ENCODE measurements at regions of chr1 and their contacts with region 1.

Region 1: DNA sequence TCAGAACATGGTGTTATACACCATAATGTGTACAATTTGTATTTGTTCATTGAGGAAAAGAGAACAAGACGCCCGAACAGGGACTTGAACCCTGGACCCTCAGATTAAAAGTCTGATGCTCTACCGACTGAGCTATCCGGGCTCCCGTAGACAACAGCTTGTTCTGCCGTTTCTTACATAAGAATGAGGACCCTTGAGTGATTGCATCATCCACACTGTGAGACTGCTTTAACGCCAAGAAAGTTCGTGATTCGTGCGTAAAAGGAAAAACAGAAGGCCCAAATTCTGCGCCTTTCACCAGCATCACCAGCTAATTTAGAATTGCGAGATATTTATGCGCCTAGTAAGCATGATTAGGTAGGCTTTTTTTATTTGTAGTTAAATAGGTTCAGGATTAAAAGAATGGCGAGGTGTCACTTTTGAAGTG is 9.2 kb upstream of the MDM4 start:
- DNase-seq: peak; percentile 97
- ATAC-seq: peak; percentile 90
- H3K4me3 ChIP-seq: peak overlapping the region; percentile 57 to 69
- H3K27ac ChIP-seq: peak overlapping the region; percentile 84
- H3K4me1 ChIP-seq: peaks cover 3% of the 10 kb centered on the region; the same call in 1 of the 2 replicates
- H3K27me3 ChIP-seq: no peaks in the 10 kb centered on the region
- CTCF ChIP-seq: no peak

Region 2: GRCh38 chr1:204431310-204432165 is 75.4 kb before region 1 on chr1:
- CTCF ChIA-PET with region 1: interaction called, 17 read pairs
- POLR2A ChIA-PET with region 1: interaction called, 6 read pairs
- in situ Hi-C with region 1: no loop called
- intact Hi-C with region 1: loop called (anchors 1 kb)
- DNase-seq: peak; percentile 50
- ATAC-seq: peak; percentile 95
- H3K4me3 ChIP-seq: no peak overlapping the region
- H3K27ac ChIP-seq: peak overlapping the region; percentile 11; the same call in 1 of the 2 replicates
- H3K4me1 ChIP-seq: peaks cover 3% of the 10 kb centered on the region; the same call in 1 of the 2 replicates
- H3K27me3 ChIP-seq: no peaks in the 10 kb centered on the region
- CTCF ChIP-seq: peak; percentile 95

Region 3: DNA sequence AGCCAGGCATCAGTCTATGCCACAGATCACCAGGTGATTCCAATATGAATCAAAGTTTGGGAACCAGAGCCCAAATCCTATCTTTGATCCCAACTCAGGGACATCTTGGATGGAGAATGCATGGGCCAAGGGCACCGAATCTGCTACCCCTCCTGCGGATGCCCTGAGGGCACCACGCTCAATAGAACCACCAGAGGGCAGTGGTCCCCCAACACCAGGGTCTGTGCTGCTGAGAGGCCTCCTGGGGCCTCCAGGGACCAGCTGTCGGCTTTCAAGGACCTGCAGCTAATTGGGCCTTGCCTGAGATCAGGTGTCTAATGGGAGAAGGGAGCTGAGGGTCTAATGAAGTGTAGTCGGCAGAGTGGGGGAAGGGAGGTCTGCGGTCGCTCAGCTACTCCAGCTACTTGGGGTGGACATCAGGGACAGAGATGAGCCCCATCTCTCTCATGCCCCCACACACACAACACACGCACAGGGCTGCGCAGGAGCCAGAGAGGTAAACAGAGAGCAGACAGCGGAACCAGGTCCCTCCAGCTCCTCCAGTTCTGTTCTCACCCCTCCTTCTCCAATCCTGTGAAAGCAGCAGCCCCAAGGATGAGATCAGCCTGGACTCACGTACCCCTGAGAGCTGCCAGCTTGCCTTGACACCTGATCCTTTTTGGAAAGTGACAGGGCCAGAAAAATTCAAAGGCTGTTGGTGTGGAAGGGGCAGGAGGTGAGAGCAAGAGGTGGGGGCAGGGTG is 60.4 kb before region 1 on chr1:
- CTCF ChIA-PET with region 1: interaction called, 9 read pairs
- POLR2A ChIA-PET with region 1: no interaction called
- in situ Hi-C with region 1: no loop called
- intact Hi-C with region 1: loop called (anchors 1 kb)
- DNase-seq: no peak
- ATAC-seq: peak; percentile 88
- H3K4me3 ChIP-seq: no peak overlapping the region
- H3K27ac ChIP-seq: no peak overlapping the region
- H3K4me1 ChIP-seq: peaks cover 3% of the 10 kb centered on the region; the same call in 1 of the 2 replicates
- H3K27me3 ChIP-seq: no peaks in the 10 kb centered on the region
- CTCF ChIP-seq: peak; percentile 79

Region 4: DNA sequence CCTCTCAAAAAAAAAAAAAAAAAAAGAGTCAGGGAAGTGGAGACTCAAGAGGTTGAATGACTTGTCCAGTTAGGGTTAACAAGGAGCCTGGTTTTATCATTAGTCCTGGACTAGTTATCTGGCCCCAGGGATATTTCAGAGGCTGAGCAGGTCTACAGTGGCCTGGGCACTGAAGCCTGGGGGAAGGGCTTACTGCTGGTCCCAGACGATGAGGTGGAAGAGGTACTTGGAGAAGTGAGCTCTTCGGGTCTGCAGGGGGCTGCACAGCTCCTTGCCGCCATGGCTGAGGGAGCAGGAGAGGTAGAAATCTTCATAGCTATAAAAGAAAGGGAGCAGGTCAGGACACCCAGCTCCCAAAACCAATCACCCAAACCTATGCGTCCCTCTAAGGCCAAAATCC is 52.5 kb before region 1 on chr1:
- CTCF ChIA-PET with region 1: interaction called, 11 read pairs
- POLR2A ChIA-PET with region 1: no interaction called
- in situ Hi-C with region 1: no loop called
- intact Hi-C with region 1: no loop called
- DNase-seq: no peak
- ATAC-seq: no peak
- H3K4me3 ChIP-seq: no peak overlapping the region
- H3K27ac ChIP-seq: no peak overlapping the region
- H3K4me1 ChIP-seq: no peaks in the 10 kb centered on the region
- H3K27me3 ChIP-seq: no peaks in the 10 kb centered on the region
- CTCF ChIP-seq: no peak

Region 5: GRCh38 chr1:204572931-204573891 is 66.2 kb after region 1 on chr1:
- CTCF ChIA-PET with region 1: no interaction called
- POLR2A ChIA-PET with region 1: no interaction called
- in situ Hi-C with region 1: no loop called
- intact Hi-C with region 1: no loop called
- DNase-seq: peak; percentile 57
- ATAC-seq: peak; percentile 23; the same call in 1 of the 2 replicates
- H3K4me3 ChIP-seq: no peak overlapping the region
- H3K27ac ChIP-seq: no peak overlapping the region
- H3K4me1 ChIP-seq: no peaks in the 10 kb centered on the region
- H3K27me3 ChIP-seq: no peaks in the 10 kb centered on the region
- CTCF ChIP-seq: no peak

Region 6: GRCh38 chr1:204647114-204647804 is 140.3 kb after region 1 on chr1:
- CTCF ChIA-PET with region 1: no interaction called
- POLR2A ChIA-PET with region 1: no interaction called
- in situ Hi-C with region 1: no loop called
- intact Hi-C with region 1: no loop called
- DNase-seq: no peak
- ATAC-seq: peak; percentile 65; the same call in 1 of the 2 replicates
- H3K4me3 ChIP-seq: no peak overlapping the region
- H3K27ac ChIP-seq: no peak overlapping the region
- H3K4me1 ChIP-seq: no peaks in the 10 kb centered on the region
- H3K27me3 ChIP-seq: no peaks in the 10 kb centered on the region
- CTCF ChIP-seq: no peak